ENCODE measurements at regions of chr1 and their contacts with region 1.

Region 1: GRCh38 chr1:110460253-110461220 is 9.6 kb downstream of the PROK1 start:
- DNase-seq: peak; percentile 24
- H3K4me3 ChIP-seq: no peak overlapping the region
- CTCF ChIP-seq: peak; percentile 84

Region 2: GRCh38 chr1:110087812-110088738 is 372.5 kb before region 1 on chr1:
- CTCF ChIA-PET with region 1: interaction called, 17 read pairs
- POLR2A ChIA-PET with region 1: no interaction called
- DNase-seq: no peak
- H3K4me3 ChIP-seq: no peak overlapping the region
- CTCF ChIP-seq: peak; percentile 63

Region 3: DNA sequence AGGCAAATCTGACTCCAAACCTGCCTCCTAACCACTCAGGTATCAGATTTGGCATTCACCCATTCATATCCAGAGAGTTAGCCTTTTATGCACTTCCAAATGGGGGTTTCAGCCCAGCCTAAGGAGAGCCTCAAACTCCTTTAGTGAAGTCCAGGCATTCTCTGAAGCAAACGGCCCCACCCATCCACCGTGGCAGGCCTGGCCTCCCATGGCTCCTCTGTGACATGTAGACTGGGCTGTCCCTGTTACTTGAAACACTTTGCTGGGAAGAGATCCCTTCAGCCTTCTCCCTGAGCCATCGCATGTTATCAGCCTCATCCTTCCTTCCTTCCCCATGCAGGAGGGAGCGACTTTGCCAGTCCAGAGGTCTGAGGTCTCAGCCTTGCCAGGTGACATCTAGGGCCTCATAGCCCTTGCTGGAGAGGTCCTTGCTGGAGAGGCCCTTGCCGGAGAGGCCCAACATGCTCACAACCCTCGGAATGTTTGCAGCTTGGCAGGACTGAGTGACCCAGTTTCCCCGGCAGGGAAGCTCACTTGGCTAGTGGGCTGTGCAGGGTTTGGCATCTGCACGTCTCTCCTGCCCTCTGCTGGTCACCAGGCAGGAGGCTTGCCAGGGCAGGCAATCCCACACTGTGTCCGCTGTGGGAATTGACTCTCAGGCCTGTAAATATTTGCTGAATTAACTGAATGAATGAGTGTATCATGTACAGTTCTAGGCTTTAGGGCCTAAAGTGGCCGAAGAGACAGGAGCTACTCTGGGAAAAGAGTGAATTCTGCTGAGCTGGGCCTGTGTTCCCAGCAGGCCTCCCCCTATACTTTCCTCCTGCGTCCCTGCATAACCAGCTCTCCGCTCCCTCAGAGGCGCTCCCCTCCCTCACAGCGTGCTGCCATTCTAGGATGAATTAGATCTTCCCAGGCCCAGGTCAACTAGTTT is 148.1 kb before region 1 on chr1:
- CTCF ChIA-PET with region 1: interaction called, 44 read pairs
- POLR2A ChIA-PET with region 1: interaction called, 5 read pairs
- DNase-seq: no peak
- H3K4me3 ChIP-seq: no peak overlapping the region
- CTCF ChIP-seq: peak; percentile 97

Region 4: GRCh38 chr1:110338886-110339406 is 121.6 kb before region 1 on chr1 and contains the start of gene RBM15:
- CTCF ChIA-PET with region 1: interaction called, 41 read pairs
- POLR2A ChIA-PET with region 1: interaction called, 5 read pairs
- DNase-seq: peak; percentile 100
- H3K4me3 ChIP-seq: peak within 1 kb of the TSS; percentile 98
- CTCF ChIP-seq: no peak

Region 5: DNA sequence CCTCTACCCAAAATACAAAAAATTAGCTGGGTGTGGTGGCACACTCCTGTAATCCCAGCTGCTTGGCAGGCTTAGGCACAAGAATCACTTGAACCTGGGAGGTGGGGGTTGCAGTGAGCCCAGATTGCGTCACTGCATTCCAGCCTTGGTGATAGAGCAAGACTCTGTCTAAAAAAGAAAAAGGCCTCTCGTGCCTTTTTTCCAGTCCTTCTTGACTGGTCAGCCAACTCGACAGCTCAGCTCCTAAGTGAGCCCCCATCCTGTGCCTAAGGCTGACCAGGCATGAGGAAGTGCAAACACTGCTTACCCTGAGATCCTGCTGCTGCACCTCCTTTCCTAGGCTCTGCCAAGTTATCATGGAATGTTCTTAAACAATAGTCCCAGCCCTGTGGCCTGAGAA is 19.7 kb before region 1 on chr1:
- CTCF ChIA-PET with region 1: interaction called, 55 read pairs
- POLR2A ChIA-PET with region 1: no interaction called
- DNase-seq: no peak
- H3K4me3 ChIP-seq: no peak overlapping the region
- CTCF ChIP-seq: no peak

Region 6: GRCh38 chr1:110482662-110483307 is 22.2 kb after region 1 on chr1:
- CTCF ChIA-PET with region 1: interaction called, 11 read pairs
- POLR2A ChIA-PET with region 1: no interaction called
- DNase-seq: no peak
- H3K4me3 ChIP-seq: no peak overlapping the region
- CTCF ChIP-seq: no peak

Region 7: DNA sequence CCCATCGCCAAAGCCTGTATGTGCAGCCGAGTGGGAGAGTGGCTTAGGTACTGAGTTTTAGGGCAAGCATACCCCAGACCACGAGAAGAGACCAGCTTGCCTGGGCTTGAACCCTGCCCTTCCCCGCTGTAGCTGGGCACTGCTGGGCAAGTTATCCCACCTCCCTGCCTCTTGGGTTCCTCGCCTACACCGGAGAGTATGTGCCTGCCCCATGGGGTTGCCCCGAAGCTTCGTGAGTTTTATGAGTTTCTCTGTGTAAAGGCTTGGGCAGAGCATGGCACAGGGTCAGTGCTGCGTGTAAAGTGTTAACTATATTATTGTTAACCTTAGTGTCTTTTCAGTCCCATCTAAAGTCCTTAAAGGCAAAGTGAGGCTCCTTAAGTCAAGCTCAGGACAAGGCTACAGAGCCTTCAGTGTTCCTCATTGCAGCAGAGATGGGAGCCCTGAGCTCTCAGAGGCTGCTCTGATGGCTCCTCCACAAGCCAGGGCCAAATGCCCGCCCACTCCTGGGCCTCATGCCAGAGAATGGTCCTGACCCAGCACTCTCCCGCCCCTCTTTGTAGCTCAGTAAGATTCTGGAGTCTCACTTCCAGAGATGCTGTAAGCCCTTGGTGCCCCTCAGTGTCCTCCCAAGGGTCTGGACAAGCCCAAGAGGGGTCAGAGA is 95.4 kb after region 1 on chr1:
- CTCF ChIA-PET with region 1: no interaction called
- POLR2A ChIA-PET with region 1: no interaction called
- DNase-seq: no peak
- H3K4me3 ChIP-seq: no peak overlapping the region
- CTCF ChIP-seq: no peak

Measured in AG04449 (cell line).